ENCODE measurements at regions of chr20 and their contacts with region 1.

Region 1: DNA sequence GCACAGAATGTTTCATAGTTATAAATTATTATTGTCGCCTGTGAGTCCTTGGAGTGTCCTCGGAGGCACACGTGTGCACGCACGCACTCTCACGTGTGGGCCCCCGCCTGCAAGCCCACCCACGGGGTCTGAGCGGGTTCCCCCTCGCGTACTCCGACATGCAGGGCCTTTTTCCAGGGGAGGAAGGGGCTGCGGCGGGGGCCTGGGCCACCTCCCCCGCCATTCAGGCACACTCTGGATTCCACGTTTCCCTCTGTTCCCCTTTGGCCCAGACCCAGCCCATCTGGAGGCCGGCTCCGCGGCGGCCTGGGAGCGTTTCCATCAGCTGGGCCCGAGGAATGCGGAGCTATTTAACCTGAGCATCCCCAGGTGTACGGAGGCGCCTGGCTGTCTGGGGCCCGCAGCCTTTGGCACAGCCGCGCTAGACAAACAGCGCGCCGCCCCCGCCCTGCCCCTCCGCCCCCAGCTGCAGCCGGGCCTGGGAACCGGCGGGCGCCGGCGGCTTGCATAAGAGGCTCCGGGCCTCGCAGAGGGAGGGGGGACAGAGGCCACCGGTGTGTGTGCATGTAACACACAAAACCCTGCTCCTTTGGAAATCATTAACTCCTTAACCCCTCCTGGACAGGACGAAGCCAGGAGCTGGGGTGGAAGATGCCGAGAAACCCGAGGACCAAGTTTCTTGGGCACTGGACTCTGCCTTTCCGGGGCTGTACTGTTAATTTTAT is 3.3 kb downstream of the ID1 start:
- DNase-seq: peak; percentile 81
- ATAC-seq: peak; percentile 21

Region 2: DNA sequence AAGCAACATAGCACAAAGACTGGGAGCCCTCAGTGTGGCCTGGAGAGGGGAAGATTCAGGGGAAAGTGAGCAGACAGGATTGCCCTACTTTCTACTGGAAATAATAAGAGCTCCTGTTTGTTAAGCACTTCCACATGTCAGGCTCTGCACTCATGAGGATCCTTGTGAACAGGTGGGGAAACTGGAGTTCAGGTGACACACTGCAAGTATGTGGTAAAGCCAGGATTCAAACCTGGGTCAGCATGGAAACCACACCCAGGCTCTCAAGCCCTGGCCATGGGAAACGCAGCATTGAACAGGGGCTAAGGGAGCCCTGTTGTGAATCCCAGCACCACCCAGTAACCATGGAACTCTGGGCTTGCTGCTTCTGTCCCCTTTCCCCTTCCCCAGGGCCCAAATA is 46.2 kb before region 1 on chr20:
- intact Hi-C with region 1: loop called (anchors 2 kb)
- DNase-seq: no peak
- ATAC-seq: no peak

Region 3: GRCh38 chr20:31666258-31667042 is 58.0 kb after region 1 on chr20:
- intact Hi-C with region 1: no loop called
- DNase-seq: peak; percentile 63
- ATAC-seq: peak; percentile 51

Region 4: DNA sequence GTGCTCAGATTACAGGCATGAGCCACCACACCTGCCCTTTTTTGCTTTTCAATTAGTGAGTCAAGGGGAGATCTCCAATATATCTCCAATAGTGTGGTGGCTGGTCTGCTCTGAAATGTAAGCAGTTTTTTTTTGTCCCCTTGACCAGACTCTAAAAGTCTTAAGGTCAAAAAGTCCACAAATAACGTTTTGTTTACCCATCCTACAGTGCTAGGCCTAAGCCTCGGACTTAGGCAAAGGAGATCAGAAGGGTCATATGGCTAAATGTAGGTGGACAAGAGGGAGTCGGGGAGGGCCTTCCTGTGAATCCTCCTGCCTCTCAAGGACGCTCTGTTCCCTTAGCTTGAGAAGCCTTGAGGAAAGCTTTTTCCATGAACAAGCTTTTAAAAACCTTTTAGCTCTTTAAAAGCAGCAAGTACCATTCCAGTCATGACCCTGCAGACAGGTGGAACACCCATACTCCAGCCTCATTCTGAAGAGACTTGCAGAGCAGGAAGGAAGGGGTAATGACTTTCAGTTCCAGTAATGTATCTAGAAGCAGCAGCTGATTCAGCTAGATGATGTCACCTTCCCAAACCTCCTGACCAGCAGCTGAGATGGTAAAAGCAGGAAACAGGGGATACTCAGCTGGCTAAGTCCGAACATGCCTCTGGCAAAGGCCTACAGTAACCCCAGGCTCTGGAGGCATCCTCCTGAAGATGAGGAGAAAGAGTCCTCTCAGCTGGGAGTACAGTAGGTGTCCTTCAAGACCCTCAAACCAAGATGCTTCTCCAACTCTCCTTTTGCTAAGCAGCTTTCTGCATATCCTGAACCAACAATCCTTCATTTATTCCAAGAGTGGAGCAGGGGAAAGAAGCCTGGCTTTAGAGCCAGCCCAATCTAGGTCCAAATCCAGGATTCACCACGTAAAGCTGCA is 90.6 kb after region 1 on chr20:
- intact Hi-C with region 1: no loop called
- DNase-seq: no peak
- ATAC-seq: peak; percentile 87

Region 5: DNA sequence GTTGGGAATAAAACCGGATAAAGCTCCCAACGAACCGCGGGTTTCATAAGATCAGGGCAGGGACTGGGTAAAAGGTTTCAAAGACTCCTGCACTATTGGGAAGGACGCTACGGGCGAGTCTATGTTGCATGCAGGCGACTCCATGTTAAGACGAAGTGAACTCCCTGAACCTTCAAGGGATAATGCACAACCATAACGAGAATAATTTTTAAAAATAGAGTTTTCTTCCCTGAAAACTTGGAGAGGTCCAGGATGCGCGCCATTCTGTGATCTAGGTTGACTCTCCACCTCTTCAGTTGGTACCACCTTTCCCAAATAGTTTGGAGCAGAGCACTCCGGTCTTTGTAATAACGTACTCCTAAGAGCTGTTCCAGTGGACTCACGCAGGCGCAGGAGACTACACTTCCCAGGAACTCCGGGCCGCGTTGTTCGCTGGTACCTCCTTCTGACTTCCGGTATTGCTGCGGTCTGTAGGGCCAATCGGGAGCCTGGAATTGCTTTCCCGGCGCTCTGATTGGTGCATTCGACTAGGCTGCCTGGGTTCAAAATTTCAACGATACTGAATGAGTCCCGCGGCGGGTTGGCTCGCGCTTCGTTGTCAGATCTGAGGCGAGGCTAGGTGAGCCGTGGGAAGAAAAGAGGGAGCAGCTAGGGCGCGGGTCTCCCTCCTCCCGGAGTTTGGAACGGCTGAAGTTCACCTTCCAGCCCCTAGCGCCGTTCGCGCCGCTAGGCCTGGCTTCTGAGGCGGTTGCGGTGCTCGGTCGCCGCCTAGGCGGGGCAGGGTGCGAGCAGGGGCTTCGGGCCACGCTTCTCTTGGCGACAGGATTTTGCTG is 130.5 kb after region 1 on chr20 and contains the start of gene TPX2:
- intact Hi-C with region 1: no loop called
- DNase-seq: peak; percentile 94
- ATAC-seq: peak; percentile 100
- total RNA-seq, gene TPX2: 0.72 TPM

Region 6: GRCh38 chr20:32497589-32498224 is 889.3 kb after region 1 on chr20:
- intact Hi-C with region 1: no loop called
- DNase-seq: no peak
- ATAC-seq: peak; percentile 53